Panc1 (cell line): ENCODE measurements at regions of chrX and their contacts with region 1.

Region 1: GRCh38 chrX:130393451-130394074 is 8.1 kb upstream of the GPR119 start:
- DNase-seq: peak; percentile 20
- ATAC-seq: peak; percentile 94
- H3K4me3 ChIP-seq: no peak overlapping the region
- H3K27ac ChIP-seq: no peak overlapping the region
- H3K4me1 ChIP-seq: no peaks in the 10 kb centered on the region
- H3K27me3 ChIP-seq: peaks cover 5% of the 10 kb centered on the region; the same call in 1 of the 2 replicates
- CTCF ChIP-seq: peak; percentile 88

Region 2: DNA sequence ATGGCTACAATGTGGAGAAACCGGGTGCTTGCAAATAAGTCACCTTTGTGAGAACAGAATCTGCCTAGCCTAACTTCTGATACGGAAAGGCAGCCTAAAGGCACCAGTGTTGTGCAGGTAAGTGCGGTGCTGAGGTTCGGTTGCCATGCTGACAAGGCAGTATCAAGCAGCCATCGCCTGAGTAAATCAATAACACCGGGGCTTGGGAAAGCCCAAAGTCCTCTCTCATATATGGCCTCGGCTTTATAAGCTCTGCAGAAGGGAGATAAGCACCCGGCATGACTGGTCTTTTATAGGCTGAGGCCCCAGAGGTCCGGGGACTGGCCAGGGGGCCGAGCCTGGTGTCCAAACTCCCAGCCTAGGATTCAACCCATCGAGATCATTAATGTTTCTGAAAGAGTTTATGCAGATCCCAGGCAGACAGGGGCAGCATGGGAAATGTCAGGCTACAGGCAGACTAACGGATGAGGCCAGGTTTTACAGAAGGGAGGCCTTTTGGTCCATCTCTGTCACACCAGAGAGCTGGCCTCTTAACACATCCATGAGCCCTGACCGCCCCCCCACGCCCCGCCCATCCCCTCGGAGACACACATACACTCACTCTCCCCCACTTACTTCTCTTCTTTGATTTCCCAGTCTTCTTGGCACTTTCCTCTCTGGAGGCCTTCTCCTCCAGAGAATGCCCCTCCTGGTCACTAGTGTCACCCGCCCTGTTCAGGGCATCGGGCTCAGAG is 321.8 kb before region 1 on chrX:
- CTCF ChIA-PET with region 1: no interaction called
- POLR2A ChIA-PET with region 1: no interaction called
- in situ Hi-C with region 1: no loop called
- intact Hi-C with region 1: no loop called
- DNase-seq: no peak
- ATAC-seq: no peak
- H3K4me3 ChIP-seq: no peak overlapping the region
- H3K27ac ChIP-seq: no peak overlapping the region
- H3K4me1 ChIP-seq: no peaks in the 10 kb centered on the region
- H3K27me3 ChIP-seq: no peaks in the 10 kb centered on the region
- CTCF ChIP-seq: no peak

Region 3: GRCh38 chrX:130330706-130331105 is 62.9 kb before region 1 on chrX:
- CTCF ChIA-PET with region 1: no interaction called
- POLR2A ChIA-PET with region 1: interaction called, 10 read pairs
- in situ Hi-C with region 1: no loop called
- intact Hi-C with region 1: no loop called
- DNase-seq: peak; percentile 47
- ATAC-seq: peak; percentile 98
- H3K4me3 ChIP-seq: no peak overlapping the region
- H3K27ac ChIP-seq: no peak overlapping the region
- H3K4me1 ChIP-seq: peaks cover 3% of the 10 kb centered on the region; the same call in 1 of the 2 replicates
- H3K27me3 ChIP-seq: peaks cover 3% of the 10 kb centered on the region
- CTCF ChIP-seq: peak; percentile 91

Region 4: GRCh38 chrX:130419263-130419662 is 25.7 kb after region 1 on chrX:
- CTCF ChIA-PET with region 1: interaction called, 12 read pairs
- POLR2A ChIA-PET with region 1: interaction called, 3 read pairs
- in situ Hi-C with region 1: no loop called
- intact Hi-C with region 1: no loop called
- DNase-seq: no peak
- ATAC-seq: no peak
- H3K4me3 ChIP-seq: no peak overlapping the region
- H3K27ac ChIP-seq: no peak overlapping the region
- H3K4me1 ChIP-seq: no peaks in the 10 kb centered on the region
- H3K27me3 ChIP-seq: no peaks in the 10 kb centered on the region; the same call in 1 of the 2 replicates
- CTCF ChIP-seq: no peak

Region 5: DNA sequence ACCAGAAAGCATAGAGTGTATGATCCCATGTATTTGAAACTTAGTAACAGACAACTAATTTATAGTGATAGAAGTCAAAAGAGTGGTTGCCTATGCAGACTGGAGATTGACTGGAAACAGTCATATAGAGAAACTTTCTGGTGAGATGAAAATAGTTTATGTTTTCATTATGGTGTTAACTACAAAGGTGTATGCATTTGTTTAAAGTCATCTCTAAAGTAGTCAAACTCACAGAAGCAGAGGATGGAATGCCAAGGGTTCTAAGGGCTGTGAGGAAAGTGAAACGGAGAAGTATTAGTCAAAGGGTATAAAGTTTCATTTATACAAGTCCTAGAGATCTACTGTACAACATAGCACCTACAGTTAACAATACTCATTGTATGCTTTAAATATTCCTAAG is 463.6 kb after region 1 on chrX:
- CTCF ChIA-PET with region 1: no interaction called
- POLR2A ChIA-PET with region 1: no interaction called
- in situ Hi-C with region 1: no loop called
- intact Hi-C with region 1: no loop called
- DNase-seq: no peak
- ATAC-seq: no peak
- H3K4me3 ChIP-seq: no peak overlapping the region
- H3K27ac ChIP-seq: no peak overlapping the region
- H3K4me1 ChIP-seq: no peaks in the 10 kb centered on the region
- H3K27me3 ChIP-seq: no peaks in the 10 kb centered on the region
- CTCF ChIP-seq: no peak